Mucosa of descending colon (tissue), 3 donors: ENCODE measurements at regions of chr11 and their contacts with region 1.

Region 1: GRCh38 chr11:116276051-116277044 is 496.4 kb downstream of the BUD13 start:
- DNase-seq: peak; percentile 81 to 87 (median 84)
- ATAC-seq: peak; percentile 93
- H3K4me3 ChIP-seq: no peak overlapping the region
- H3K4me1 ChIP-seq: no peaks in the 10 kb centered on the region
- CTCF ChIP-seq: peak; percentile 95

Region 2: DNA sequence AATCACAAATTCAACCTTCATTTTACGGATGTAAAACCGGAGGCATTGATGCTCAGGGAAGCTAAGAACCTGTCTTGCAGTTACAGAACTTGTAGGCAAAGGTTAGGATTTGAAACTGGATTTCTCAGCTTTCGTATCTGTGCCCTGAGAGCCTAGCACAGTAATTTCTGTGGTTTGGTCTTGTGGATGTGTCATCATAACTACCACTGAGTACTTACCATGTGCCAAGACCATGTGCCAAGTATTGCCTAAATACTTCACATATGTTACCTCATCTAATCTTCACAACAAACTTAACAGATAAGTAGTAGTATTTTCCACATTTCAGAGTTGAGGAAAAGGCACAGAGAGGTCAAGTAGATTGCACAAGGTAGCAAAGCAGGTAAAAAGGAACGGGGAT is 1457.3 kb before region 1 on chr11:
- intact Hi-C with region 1: no loop called
- DNase-seq: no peak
- ATAC-seq: no peak
- H3K4me3 ChIP-seq: no peak overlapping the region
- H3K4me1 ChIP-seq: no peaks in the 10 kb centered on the region
- CTCF ChIP-seq: no peak

Region 3: GRCh38 chr11:115324581-115325432 is 951.5 kb before region 1 on chr11:
- intact Hi-C with region 1: loop called (anchors 10 kb)
- DNase-seq: peak in 1 of 3 donors; percentile 50
- ATAC-seq: peak; percentile 88
- H3K4me3 ChIP-seq: no peak overlapping the region
- H3K4me1 ChIP-seq: no peaks in the 10 kb centered on the region
- CTCF ChIP-seq: peak; percentile 64

Region 4: DNA sequence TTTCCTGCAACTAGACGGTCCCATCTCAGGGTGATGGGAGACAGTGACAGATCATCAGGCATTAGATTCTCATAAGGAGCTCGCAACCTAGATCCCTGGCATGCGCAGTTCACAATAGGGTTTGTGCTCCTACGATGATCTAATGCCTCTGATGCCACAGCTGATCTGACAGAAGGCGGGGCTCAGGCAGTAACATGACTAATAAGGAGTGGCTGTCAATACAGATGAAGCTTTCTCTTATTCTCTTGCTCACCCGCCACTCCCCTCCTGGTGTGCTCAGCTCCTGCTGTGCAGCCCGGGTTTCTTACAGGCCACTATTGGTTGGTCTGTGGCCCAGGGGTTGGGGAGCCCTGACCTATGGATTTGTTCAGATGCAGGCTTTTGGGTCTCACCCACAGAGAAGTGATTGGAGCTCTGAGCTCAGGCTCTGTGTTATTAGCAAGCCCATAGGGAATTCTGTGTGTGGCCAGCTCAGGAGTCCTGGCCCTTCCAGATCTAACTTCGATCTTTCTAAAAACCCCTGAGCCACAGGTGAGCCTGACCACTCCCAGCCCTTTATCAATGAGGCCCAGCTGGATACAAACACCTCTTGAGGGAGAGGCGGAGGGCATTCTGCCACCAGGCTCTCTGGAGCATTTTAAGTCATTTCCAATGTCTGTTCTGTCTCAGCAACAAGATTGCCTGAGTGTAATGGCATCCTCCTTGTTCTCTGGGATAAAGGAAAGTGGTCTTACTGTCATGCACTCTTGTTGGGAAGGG is 144.6 kb after region 1 on chr11:
- intact Hi-C with region 1: no loop called
- DNase-seq: no peak
- ATAC-seq: peak; percentile 79
- H3K4me3 ChIP-seq: no peak overlapping the region
- H3K4me1 ChIP-seq: no peaks in the 10 kb centered on the region
- CTCF ChIP-seq: no peak